GM23248 (cell line): ENCODE measurements at regions of chr22 and their contacts with region 1.

Region 1: GRCh38 chr22:28829358-28830181 is 29.2 kb upstream of the XBP1 start:
- DNase-seq: peak; percentile 85
- H3K4me3 ChIP-seq: no peak overlapping the region
- H3K27ac ChIP-seq: no peak overlapping the region
- H3K4me1 ChIP-seq: no peaks in the 10 kb centered on the region
- H3K27me3 ChIP-seq: no peaks in the 10 kb centered on the region

Region 2: GRCh38 chr22:28019881-28020871 is 809.4 kb before region 1 on chr22:
- in situ Hi-C with region 1: loop called (anchors 10 kb)
- DNase-seq: peak; percentile 78
- H3K4me3 ChIP-seq: no peak overlapping the region
- H3K27ac ChIP-seq: no peak overlapping the region
- H3K4me1 ChIP-seq: peaks cover 4% of the 10 kb centered on the region; the same call in 1 of the 2 replicates
- H3K27me3 ChIP-seq: no peaks in the 10 kb centered on the region

Region 3: DNA sequence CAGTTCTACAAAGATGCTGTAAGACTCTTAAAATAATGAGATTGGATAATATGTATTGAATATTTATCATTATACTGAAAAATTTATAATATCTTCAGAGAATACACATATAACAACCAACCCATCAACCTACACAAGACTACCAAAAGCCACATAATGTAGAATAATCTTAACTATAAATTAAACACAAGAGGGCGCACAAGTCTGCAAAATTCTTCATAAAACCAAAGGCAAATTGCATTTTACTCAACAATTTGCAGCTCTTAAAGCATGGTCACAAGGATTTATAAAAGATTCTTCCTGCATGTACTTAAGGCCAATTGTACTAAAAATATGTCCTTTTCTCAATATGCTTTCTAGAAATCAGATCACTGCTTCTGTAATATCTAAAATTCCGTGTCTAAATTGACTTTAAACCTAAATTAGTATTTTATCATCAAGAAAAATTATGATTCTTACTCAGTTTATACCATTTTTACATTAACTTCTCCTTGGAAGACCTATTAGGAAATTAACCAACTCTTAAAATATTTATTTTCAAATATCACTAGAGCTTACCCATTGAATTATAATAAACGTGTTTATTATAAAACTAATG is 228.9 kb before region 1 on chr22:
- in situ Hi-C with region 1: loop called (anchors 10 kb)
- DNase-seq: peak; percentile 76
- H3K4me3 ChIP-seq: no peak overlapping the region
- H3K27ac ChIP-seq: no peak overlapping the region
- H3K4me1 ChIP-seq: peaks cover 1% of the 10 kb centered on the region; the same call in 1 of the 2 replicates
- H3K27me3 ChIP-seq: no peaks in the 10 kb centered on the region

Region 4: DNA sequence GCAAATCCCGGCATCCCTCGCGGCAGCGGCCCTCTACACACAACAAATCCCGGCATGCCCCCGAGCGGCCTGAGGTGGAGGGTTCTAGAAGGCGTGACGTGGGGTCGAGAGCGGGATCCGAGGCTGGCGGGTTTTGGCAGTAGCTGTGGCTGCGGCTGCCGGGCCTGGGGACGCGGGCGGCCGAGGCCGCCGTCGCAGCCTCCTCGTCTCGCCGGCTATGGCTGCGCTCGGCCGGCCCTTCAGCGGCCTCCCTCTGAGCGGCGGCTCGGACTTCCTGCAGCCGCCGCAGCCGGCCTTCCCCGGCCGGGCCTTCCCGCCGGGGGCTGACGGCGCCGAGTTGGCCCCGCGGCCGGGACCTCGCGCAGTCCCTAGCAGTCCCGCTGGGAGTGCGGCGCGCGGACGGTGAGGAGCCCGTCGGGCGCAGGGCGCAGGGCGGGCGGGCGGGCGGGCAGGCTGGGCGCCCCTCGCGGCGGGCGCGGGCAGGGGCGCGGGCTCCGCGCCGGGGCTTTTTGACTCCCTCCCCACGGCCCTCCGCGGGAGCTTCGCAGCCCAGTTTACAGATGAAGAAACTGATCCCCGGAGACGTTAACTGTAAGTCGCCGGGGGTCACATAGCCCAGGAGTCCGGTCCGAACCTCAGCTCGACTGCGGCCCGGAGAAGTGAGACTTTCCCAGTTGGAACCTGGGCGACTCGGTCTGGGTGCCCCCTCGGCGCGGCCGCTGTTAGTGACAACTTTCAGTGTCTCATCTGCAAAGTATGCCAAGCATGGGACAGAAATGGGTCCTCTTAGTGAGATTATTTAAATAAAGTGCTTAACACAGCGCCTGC is 56.7 kb before region 1 on chr22 and contains the start of gene CCDC117:
- in situ Hi-C with region 1: no loop called
- DNase-seq: peak; percentile 98
- H3K4me3 ChIP-seq: peak within 1 kb of the TSS; percentile 82
- H3K27ac ChIP-seq: peak within 1 kb of the TSS; percentile 92
- H3K4me1 ChIP-seq: 0 out of 2 replicates have a peak, but pooled peaks cover 8% of the 10 kb centered on the region
- H3K27me3 ChIP-seq: no peaks in the 10 kb centered on the region
- total RNA-seq, gene CCDC117: 24.2 and 25.2 TPM in 2 replicates